ENCODE measurements at regions of chr22 and their contacts with region 1.

Region 1: GRCh38 chr22:22960307-22960706 is 72.7 kb downstream of the IGLL5 start:
- DNase-seq: no peak
- ATAC-seq: no peak
- H3K4me3 ChIP-seq: no peak overlapping the region
- H3K27ac ChIP-seq: no peak overlapping the region
- H3K4me1 ChIP-seq: no peaks in the 10 kb centered on the region
- H3K27me3 ChIP-seq: peaks cover 11% of the 10 kb centered on the region
- CTCF ChIP-seq: no peak

Region 2: GRCh38 chr22:22810018-22810427 is 150.3 kb before region 1 on chr22:
- intact Hi-C with region 1: no loop called
- DNase-seq: peak; percentile 68
- ATAC-seq: peak in 1 of 2 donors; percentile 86
- H3K4me3 ChIP-seq: no peak overlapping the region
- H3K27ac ChIP-seq: no peak overlapping the region
- H3K4me1 ChIP-seq: no peaks in the 10 kb centered on the region
- H3K27me3 ChIP-seq: peaks cover 5% of the 10 kb centered on the region
- CTCF ChIP-seq: peak; percentile 86

Region 3: GRCh38 chr22:22913989-22914388 is 46.3 kb before region 1 on chr22:
- intact Hi-C with region 1: no loop called
- DNase-seq: peak; percentile 22
- ATAC-seq: no peak
- H3K4me3 ChIP-seq: no peak overlapping the region
- H3K27ac ChIP-seq: no peak overlapping the region
- H3K4me1 ChIP-seq: no peaks in the 10 kb centered on the region
- H3K27me3 ChIP-seq: peaks cover 9% of the 10 kb centered on the region
- CTCF ChIP-seq: no peak

Region 4: DNA sequence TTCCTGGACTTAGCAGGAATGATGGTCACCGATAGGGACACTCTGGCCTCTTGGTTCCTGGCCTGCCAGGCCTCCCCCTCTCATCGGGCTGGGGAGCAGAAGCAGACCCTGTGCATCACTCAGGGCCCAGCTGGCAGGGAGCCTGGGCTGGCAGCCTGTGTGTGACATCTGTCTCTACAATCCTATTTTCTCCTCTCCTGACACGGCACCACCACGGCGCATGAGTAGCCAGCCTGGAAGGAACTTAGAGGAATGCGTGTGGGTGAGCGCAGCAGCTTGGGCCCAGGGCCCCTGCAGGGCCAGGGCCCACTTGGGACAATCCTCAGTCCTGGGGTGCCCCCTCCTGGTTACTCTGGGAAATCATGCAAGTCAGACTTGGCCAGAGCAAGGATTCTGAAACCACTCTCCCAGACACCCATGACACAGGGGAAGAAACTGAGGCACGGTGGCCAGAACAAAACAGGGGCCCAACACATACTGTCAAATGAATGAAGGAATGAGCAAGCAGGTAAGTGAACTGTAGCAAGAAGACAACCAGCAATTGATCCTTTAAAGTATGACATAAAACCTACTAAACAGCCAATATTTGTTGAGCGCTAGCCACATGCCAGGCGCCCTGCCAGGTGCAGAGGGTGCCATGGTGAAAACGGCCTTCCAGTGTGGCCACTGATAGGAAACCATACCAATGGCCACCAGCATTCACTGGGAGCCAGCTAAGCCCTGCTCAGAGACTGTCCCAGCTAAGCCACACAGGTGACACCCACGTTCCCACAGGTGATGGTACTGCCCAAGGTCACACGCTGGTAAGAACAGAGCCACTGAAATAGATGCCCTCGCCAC is 168.2 kb after region 1 on chr22:
- intact Hi-C with region 1: loop called (anchors 10 kb)
- DNase-seq: peak; percentile 66
- ATAC-seq: peak; percentile 82 to 84
- H3K4me3 ChIP-seq: no peak overlapping the region
- H3K27ac ChIP-seq: no peak overlapping the region
- H3K4me1 ChIP-seq: no peaks in the 10 kb centered on the region
- H3K27me3 ChIP-seq: no peaks in the 10 kb centered on the region
- CTCF ChIP-seq: peak; percentile 72